HEK293T (cell line): ENCODE measurements at regions of chr6 and their contacts with region 1.

Region 1: GRCh38 chr6:26031595-26032339 is 55.5 kb upstream of the HFE start:
- DNase-seq: peak; percentile 85

Region 2: DNA sequence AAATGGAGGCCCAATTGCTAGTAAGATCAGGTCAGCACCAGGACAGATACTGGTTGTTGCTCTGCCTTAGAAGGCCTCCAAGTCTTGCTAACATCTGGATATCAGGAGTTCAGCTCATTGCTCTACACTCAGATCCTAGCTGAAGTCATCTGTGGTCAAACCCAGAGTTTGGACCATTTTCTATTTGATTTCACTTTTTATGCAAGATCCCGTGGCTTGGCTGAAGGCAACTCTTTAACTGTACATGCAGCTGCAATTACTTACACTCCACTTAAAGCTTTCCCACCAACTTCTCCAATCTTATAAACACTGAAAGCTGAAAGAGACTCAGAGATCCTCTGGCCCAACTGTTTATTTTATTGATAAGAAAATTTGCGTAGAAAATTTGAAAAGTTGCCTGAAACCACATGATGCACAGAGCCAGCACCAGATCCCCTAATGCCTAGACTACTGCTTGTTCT is 104.0 kb before region 1 on chr6:
- CTCF ChIA-PET with region 1: no interaction called
- POLR2A ChIA-PET with region 1: no interaction called
- DNase-seq: no peak

Region 3: DNA sequence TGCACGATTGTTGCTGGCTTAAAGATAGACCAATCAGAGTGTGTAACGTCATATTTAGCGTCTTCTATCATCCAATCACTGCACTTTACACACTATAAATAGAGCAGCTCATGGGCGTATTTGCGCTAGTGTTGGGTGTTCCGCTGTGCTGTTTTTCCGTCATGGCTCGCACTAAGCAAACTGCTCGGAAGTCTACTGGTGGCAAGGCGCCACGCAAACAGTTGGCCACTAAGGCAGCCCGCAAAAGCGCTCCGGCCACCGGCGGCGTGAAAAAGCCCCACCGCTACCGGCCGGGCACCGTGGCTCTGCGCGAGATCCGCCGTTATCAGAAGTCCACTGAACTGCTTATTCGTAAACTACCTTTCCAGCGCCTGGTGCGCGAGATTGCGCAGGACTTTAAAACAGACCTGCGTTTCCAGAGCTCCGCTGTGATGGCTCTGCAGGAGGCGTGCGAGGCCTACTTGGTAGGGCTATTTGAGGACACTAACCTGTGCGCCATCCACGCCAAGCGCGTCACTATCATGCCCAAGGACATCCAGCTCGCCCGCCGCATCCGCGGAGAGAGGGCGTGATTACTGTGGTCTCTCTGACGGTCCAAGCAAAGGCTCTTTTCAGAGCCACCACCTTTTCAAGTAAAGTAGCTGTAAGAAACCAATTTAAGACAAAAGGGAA is 11.3 kb before region 1 on chr6:
- CTCF ChIA-PET with region 1: interaction called, 3 read pairs
- POLR2A ChIA-PET with region 1: interaction called, 304 read pairs
- DNase-seq: peak; percentile 78

Region 4: DNA sequence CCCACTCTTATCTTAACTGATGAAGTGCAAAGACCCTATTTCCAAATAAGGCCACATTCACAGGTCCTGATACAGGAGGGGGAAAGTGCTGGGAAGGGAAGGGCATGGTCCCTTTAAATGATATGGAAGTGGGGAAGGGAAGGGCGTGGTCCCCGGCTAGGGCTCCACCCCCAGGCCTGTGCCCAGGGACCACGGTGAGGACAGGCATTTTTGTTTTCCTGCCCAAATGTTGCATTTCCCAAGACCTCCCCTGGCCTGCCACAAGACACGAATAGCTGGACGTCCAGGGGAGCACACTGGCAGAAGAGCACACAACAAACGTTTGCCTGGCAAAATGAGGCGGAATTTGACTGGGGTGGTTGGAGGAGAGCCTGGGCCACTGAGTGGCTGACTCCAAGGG is 39.4 kb after region 1 on chr6:
- CTCF ChIA-PET with region 1: interaction called, 4 read pairs
- POLR2A ChIA-PET with region 1: interaction called, 715 read pairs
- DNase-seq: no peak

Region 5: DNA sequence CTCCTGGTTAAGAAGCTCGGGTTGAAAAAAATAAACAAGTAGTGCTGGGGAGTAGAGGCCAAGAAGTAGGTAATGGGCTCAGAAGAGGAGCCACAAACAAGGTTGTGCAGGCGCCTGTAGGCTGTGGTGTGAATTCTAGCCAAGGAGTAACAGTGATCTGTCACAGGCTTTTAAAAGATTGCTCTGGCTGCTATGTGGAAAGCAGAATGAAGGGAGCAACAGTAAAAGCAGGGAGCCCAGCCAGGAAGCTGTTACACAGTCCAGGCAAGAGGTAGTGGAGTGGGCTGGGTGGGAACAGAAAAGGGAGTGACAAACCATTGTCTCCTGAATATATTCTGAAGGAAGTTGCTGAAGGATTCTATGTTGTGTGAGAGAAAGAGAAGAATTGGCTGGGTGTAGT is 57.5 kb after region 1 on chr6:
- CTCF ChIA-PET with region 1: no interaction called
- POLR2A ChIA-PET with region 1: no interaction called
- DNase-seq: no peak

Region 6: DNA sequence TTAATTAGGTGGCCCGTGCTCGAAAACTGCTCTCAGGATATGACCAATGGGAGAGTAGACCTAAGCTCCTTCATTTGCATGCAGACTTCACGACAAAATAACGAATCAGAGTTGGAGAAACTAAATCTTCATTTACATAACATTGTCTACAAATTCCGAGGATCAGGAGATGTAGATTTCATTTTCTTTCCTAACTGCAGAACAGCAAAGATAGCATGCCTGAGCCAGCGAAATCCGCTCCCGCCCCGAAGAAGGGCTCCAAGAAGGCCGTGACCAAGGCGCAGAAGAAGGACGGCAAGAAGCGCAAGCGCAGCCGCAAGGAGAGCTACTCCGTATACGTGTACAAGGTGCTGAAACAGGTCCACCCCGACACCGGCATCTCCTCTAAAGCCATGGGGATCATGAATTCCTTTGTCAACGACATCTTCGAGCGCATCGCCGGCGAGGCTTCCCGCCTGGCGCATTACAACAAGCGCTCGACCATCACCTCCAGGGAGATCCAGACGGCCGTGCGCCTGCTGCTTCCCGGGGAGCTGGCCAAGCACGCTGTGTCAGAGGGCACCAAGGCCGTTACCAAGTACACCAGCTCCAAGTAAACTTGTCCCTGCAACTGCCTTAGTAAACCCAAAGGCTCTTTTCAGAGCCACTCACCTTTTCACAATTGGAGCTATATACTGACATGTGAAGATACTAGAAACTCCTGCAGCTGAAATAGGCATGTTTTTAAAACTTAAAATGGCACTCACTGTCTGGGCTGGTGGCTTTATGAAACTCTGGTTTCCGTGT is 152.0 kb after region 1 on chr6:
- CTCF ChIA-PET with region 1: no interaction called
- POLR2A ChIA-PET with region 1: interaction called, 14 read pairs
- DNase-seq: no peak

Region 7: GRCh38 chr6:26216356-26216885 is 184.7 kb after region 1 on chr6:
- CTCF ChIA-PET with region 1: no interaction called
- POLR2A ChIA-PET with region 1: interaction called, 12 read pairs
- DNase-seq: no peak

Region 8: DNA sequence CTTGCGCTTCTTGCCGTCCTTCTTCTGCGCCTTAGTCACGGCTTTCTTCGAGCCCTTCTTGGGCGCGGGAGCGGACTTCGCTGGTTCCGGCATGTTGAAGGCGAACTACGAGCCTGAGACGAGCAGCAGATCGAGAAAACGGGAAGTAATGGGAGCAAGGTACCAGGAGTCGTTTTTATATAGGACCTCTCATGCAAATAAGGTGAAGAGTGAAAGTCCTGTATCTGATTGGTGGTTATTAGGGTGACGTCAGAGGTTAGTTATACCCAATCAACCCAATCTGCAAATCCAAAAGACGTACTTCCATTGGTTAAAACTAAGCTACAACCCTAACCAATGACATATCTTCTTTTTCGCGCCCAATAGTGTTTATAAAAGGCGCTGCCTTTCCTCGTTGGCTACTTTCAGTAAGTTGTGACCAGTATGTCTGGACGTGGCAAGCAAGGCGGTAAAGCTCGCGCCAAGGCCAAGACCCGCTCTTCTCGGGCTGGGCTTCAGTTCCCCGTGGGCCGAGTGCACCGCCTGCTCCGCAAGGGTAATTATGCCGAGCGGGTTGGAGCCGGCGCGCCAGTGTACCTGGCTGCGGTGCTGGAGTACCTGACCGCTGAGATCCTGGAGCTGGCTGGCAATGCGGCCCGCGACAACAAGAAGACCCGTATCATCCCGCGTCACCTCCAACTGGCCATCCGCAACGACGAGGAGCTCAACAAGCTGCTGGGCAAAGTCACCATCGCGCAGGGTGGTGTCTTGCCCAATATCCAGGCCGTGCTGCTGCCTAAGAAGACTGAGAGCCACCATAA is 1115.1 kb after region 1 on chr6:
- CTCF ChIA-PET with region 1: no interaction called
- POLR2A ChIA-PET with region 1: interaction called, 20 read pairs
- DNase-seq: peak; percentile 84